Activated CD4-positive, alpha-beta T cell treated with anti-CD3 and anti-CD28 coated beads, Interleukin-2, amount 10 ng/mL, durations not matched to agents 7 days and 5 days (primary cell): ENCODE measurements at regions of chr17 and their contacts with region 1.

Region 1: DNA sequence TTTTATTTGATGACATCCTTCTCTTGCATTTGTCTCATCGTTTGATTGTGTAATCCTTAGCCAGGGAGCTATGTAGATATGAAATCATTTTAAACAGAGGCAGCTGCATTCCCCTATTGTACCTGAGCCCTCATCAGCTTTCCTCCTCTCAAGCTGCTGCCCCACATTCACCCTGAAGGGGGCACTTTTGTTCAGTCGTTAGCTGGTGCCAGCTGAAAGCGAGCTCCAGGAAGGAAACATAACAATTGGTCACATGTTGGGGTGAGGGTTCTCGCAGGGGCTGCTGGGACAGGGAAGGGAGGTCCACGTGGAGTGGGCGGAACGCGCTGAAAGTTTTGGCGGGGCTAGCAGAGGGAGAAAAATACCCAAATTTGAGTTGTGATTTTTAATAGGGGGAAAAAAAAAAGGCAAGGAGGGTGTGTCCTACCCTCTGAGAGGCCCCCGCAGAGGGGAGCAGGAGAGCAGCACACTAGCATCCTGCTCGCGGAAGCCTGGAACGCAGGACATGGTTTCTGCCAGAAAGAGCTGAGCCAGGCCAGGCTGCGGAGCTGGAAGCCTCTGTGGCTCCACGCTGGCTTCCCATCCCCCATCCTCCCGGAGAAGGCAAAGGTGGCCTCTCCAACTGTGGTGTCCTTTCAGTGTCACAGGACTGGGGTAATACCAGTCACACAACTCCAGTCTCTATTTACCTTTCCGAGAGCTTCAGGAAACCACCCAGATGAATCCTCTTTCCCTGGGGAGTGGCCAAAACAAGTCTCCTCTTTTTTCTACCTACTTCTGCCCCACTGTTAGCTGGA is 8.5 kb upstream of the MSL1 start:
- DNase-seq: peak; percentile 96
- H3K4me3 Mint-ChIP-seq: peak overlapping the region; percentile 74
- H3K27ac Mint-ChIP-seq: peak overlapping the region; percentile 79
- H3K4me1 Mint-ChIP-seq: peaks cover 55% of the 10 kb centered on the region
- H3K27me3 Mint-ChIP-seq: no peaks in the 10 kb centered on the region

Region 2: GRCh38 chr17:40018211-40019121 is 94.8 kb before region 1 on chr17:
- CTCF ChIA-PET with region 1: interaction called, 10 read pairs
- POLR2A ChIA-PET with region 1: no interaction called
- DNase-seq: no peak
- H3K4me3 Mint-ChIP-seq: no peak overlapping the region
- H3K27ac Mint-ChIP-seq: no peak overlapping the region
- H3K4me1 Mint-ChIP-seq: peaks cover 8% of the 10 kb centered on the region
- H3K27me3 Mint-ChIP-seq: no peaks in the 10 kb centered on the region

Region 3: DNA sequence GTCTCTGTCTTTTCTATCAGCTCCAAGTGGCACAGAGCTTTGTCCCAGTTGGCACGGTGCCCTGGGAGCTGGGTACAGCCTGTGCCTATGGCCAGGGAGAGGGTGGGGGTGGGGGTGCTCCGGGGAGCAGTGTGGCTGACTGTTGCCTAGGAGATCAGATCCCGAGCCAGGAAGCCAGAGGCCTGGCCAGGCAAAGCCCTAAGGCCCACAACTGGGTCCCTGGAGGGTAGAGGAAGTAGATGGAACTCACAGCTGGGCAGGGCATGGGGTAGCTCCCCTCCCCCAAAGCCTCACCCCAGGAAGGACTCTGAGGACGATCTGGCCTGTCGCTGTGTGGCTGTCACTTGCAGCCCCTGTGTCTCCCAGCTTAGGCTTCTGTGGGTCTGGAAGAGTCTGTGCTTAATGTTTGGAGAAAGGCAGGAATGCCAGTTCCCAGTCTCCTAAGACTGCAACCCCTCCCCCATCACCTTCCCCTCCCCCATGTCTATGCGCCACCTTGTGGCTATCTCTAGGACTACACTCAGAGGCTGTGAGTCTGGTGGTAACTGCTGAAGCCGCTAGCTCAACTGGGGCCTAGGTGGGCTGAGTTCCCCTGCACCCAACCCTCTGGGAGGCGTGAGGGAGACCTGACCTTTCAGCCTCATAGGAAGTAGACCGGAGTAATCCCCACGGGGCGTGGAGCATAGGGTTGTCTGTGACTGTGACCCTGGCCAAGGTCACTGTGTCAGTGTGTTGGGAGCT is 37.9 kb before region 1 on chr17:
- CTCF ChIA-PET with region 1: interaction called, 26 read pairs
- POLR2A ChIA-PET with region 1: no interaction called
- DNase-seq: peak; percentile 72
- H3K4me3 Mint-ChIP-seq: no peak overlapping the region
- H3K27ac Mint-ChIP-seq: peak overlapping the region; percentile 77
- H3K4me1 Mint-ChIP-seq: peaks cover 23% of the 10 kb centered on the region
- H3K27me3 Mint-ChIP-seq: no peaks in the 10 kb centered on the region

Region 4: DNA sequence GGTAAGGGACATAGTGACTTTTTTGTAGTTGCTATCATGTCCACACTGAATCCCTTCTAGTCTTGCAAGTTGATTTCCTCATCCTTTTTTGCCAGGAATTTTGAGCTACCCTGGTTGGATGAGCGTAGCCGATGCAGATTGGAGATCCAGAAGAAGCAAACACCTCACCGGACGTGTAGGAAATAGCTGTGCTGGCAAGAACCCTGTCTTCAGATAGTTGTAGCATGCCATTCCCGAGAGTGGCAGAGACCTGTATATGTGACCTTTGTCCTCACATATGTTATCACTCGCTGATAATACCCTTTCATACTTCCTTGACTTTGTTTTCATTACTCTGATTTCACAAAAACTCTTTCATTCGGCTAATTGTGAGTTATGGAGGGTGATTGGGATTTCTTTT is 20.9 kb after region 1 on chr17:
- CTCF ChIA-PET with region 1: interaction called, 15 read pairs
- POLR2A ChIA-PET with region 1: no interaction called
- DNase-seq: no peak
- H3K4me3 Mint-ChIP-seq: no peak overlapping the region
- H3K27ac Mint-ChIP-seq: no peak overlapping the region
- H3K4me1 Mint-ChIP-seq: peaks cover 28% of the 10 kb centered on the region
- H3K27me3 Mint-ChIP-seq: no peaks in the 10 kb centered on the region

Region 5: GRCh38 chr17:40168262-40168832 is 55.0 kb after region 1 on chr17:
- CTCF ChIA-PET with region 1: interaction called, 27 read pairs
- POLR2A ChIA-PET with region 1: interaction called, 7 read pairs
- DNase-seq: peak; percentile 53
- H3K4me3 Mint-ChIP-seq: no peak overlapping the region
- H3K27ac Mint-ChIP-seq: peak overlapping the region; percentile 20
- H3K4me1 Mint-ChIP-seq: peaks cover 6% of the 10 kb centered on the region
- H3K27me3 Mint-ChIP-seq: no peaks in the 10 kb centered on the region